Pancreas (tissue), 10 donors: ENCODE measurements at regions of chr22 and their contacts with region 1.

Region 1: GRCh38 chr22:38919631-38920190 is 37.7 kb upstream of the APOBEC3A start:
- DNase-seq: no peak
- ATAC-seq: no peak
- H3K4me3 ChIP-seq: no peak overlapping the region
- H3K27ac ChIP-seq: no peak overlapping the region
- H3K4me1 ChIP-seq: peaks cover 10 to 25% (median 20%) of the 10 kb centered on the region in 3 donors
- H3K27me3 ChIP-seq: no peaks in the 10 kb centered on the region
- CTCF ChIP-seq: no peak

Region 2: GRCh38 chr22:38879108-38879729 is 40.5 kb before region 1 on chr22:
- intact Hi-C with region 1: loop called in 2 of 3 experiments (anchors 5 to 10 kb)
- DNase-seq: no peak
- ATAC-seq: no peak
- H3K4me3 ChIP-seq: no peak overlapping the region
- H3K27ac ChIP-seq: no peak overlapping the region
- H3K4me1 ChIP-seq: peaks cover 15 to 22% (median 21%) of the 10 kb centered on the region in 3 donors
- H3K27me3 ChIP-seq: no peaks in the 10 kb centered on the region
- CTCF ChIP-seq: no peak